AG04450 (cell line): ENCODE measurements at regions of chr2 and their contacts with region 1.

Region 1: GRCh38 chr2:69724540-69725159 is 17.3 kb upstream of the ANXA4 start:
- DNase-seq: peak; percentile 51
- H3K4me3 ChIP-seq: peak overlapping the region; percentile 40
- H3K27ac ChIP-seq: no peak overlapping the region
- H3K27me3 ChIP-seq: no peaks in the 10 kb centered on the region
- CTCF ChIP-seq: peak; percentile 88

Region 2: GRCh38 chr2:69741619-69742466 is 17.2 kb after region 1 on chr2 and contains the start of gene ANXA4:
- CTCF ChIA-PET with region 1: interaction called, 35 read pairs
- POLR2A ChIA-PET with region 1: interaction called, 3 read pairs
- DNase-seq: peak; percentile 45
- H3K4me3 ChIP-seq: peak within 1 kb of the TSS; percentile 73
- H3K27ac ChIP-seq: peak within 1 kb of the TSS; percentile 95
- H3K27me3 ChIP-seq: no peaks in the 10 kb centered on the region
- CTCF ChIP-seq: no peak
- polyA plus RNA-seq, gene ANXA4: 105 and 125 TPM in 2 replicates

Region 3: DNA sequence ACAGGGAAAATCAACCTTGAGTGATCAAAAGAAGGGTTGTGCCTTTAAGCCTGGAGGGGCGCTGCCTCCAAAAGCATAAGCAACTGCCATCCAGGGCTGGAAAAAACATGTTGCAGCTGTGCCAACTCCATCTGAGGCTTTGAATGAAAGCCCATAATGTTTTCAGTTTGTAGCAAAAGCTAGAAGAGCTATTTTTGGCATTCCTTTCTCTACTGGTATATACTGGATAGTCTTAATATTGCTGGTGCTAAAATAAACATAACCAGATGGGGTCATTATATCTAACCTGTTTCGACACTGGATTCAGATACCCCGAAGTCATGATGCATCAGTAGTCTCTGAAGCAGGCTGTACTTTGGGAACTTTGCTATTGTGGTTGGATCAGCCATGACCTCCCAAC is 42.4 kb after region 1 on chr2:
- CTCF ChIA-PET with region 1: interaction called, 15 read pairs
- POLR2A ChIA-PET with region 1: no interaction called
- DNase-seq: peak; percentile 79
- H3K4me3 ChIP-seq: no peak overlapping the region; the same call in 1 of the 2 replicates
- H3K27ac ChIP-seq: peak overlapping the region; percentile 93
- H3K27me3 ChIP-seq: no peaks in the 10 kb centered on the region
- CTCF ChIP-seq: peak; percentile 46

Region 4: GRCh38 chr2:69804416-69804815 is 79.8 kb after region 1 on chr2:
- CTCF ChIA-PET with region 1: interaction called, 765 read pairs
- POLR2A ChIA-PET with region 1: no interaction called
- DNase-seq: no peak
- H3K4me3 ChIP-seq: no peak overlapping the region
- H3K27ac ChIP-seq: no peak overlapping the region
- H3K27me3 ChIP-seq: no peaks in the 10 kb centered on the region
- CTCF ChIP-seq: no peak

Region 5: DNA sequence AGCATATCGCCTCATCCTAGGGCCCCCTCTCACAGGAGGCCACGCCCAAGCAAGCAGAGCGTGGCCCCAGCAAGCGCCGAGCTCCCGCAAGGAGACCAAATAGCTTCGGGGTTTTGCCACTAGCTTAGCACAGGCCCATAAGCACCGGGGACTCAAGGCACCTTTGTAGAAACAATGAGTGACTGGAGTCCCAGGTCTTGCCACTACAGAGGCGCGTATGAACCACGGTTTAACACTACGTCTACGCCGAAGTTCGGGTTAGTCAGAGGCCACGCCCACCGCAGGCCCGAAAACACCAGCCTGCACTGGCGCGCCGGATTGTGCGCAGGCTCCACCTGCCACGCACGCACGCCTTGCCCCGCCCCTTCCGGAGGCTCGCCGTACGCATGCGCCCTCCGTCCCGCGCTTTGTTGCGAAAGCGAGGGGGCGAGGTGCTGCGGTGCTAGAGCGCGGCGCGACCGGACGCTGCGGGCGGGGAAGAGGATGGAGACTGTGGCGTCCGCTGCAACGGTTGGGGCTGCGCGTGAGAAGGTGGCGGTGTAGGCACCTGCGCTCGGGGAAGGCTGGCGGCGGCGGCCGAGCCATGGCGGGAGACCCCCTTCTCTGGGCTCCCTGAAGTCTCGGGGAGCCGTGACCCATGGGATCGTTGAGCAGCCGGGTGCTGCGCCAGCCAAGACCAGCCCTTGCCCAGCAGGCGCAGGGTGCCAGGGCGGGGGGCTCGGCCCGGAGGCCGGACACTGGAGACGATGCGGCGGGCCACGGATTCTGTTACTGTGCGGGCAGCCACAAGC is 104.8 kb after region 1 on chr2 and contains the start of gene GMCL1:
- CTCF ChIA-PET with region 1: interaction called, 18 read pairs
- POLR2A ChIA-PET with region 1: no interaction called
- DNase-seq: peak; percentile 89
- H3K4me3 ChIP-seq: peak within 1 kb of the TSS; percentile 85
- H3K27ac ChIP-seq: peak within 1 kb of the TSS; percentile 95
- H3K27me3 ChIP-seq: no peaks in the 10 kb centered on the region
- CTCF ChIP-seq: no peak
- polyA plus RNA-seq, gene GMCL1: 5.3 and 7.2 TPM in 2 replicates

Region 6: GRCh38 chr2:69863298-69863697 is 138.6 kb after region 1 on chr2:
- CTCF ChIA-PET with region 1: interaction called, 10 read pairs
- POLR2A ChIA-PET with region 1: no interaction called
- DNase-seq: no peak
- H3K4me3 ChIP-seq: no peak overlapping the region
- H3K27ac ChIP-seq: no peak overlapping the region
- H3K27me3 ChIP-seq: no peaks in the 10 kb centered on the region
- CTCF ChIP-seq: no peak

Region 7: GRCh38 chr2:69914170-69914960 is 189.7 kb after region 1 on chr2:
- CTCF ChIA-PET with region 1: interaction called, 23 read pairs
- POLR2A ChIA-PET with region 1: interaction called, 3 read pairs
- DNase-seq: peak; percentile 100
- H3K4me3 ChIP-seq: peak overlapping the region; percentile 73
- H3K27ac ChIP-seq: peak overlapping the region; percentile 95
- H3K27me3 ChIP-seq: no peaks in the 10 kb centered on the region
- CTCF ChIP-seq: no peak; the same call in 1 of the 2 replicates